ENCODE measurements at regions of chr12 and their contacts with region 1.

Region 1: GRCh38 chr12:57005980-57006808 is at the start of gene ZBTB39:
- DNase-seq: peak; percentile 16 to 85 (median 58)
- ATAC-seq: peak; percentile 81 to 89 (median 88)
- H3K4me3 ChIP-seq: peak within 1 kb of the TSS; percentile 60 to 70
- H3K4me3 Mint-ChIP-seq: peak within 1 kb of the TSS; percentile 92 to 95 (median 93)
- H3K27ac ChIP-seq: peak within 1 kb of the TSS; percentile 60
- H3K27ac Mint-ChIP-seq: peak within 1 kb of the TSS; percentile 95 to 96
- H3K4me1 ChIP-seq: peaks cover 33 to 48% of the 10 kb centered on the region in 2 experiments
- H3K4me1 Mint-ChIP-seq: peaks cover 63 to 86% (median 76%) of the 10 kb centered on the region in 3 donors
- H3K27me3 ChIP-seq: no peaks in the 10 kb centered on the region
- H3K27me3 Mint-ChIP-seq: no peaks in the 10 kb centered on the region
- total RNA-seq, gene ZBTB39: 7.9 to 11.2 (median 11.0) TPM

Region 2: DNA sequence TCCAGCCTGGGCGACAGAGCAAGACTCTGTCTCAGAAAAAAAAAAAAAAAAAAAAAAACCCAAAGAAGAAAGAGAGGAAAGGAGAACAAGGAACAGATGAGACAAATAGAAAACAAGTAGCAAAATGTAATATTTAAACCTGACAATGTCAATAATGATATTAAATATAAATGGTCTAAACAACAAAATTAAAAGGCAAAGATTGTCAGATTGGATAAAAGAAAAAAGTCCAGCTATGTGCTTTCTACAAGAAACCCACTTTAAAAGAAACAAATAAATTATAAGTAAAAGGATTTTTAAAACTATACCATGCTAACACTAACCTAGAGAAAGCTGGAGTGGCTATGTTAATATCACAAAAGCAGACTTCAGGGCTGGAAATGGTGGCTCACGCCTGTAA is 613.9 kb before region 1 on chr12:
- CTCF ChIA-PET with region 1: interaction called in 1 of 2 experiments, 11 read pairs
- POLR2A ChIA-PET with region 1: no interaction called
- DNase-seq: no peak
- ATAC-seq: no peak
- H3K4me3 ChIP-seq: no peak overlapping the region
- H3K4me3 Mint-ChIP-seq: no peak overlapping the region
- H3K27ac ChIP-seq: no peak overlapping the region
- H3K27ac Mint-ChIP-seq: no peak overlapping the region
- H3K4me1 ChIP-seq: no peaks in the 10 kb centered on the region
- H3K4me1 Mint-ChIP-seq: no peaks in the 10 kb centered on the region
- H3K27me3 ChIP-seq: no peaks in the 10 kb centered on the region
- H3K27me3 Mint-ChIP-seq: no peaks in the 10 kb centered on the region

Region 3: GRCh38 chr12:56941299-56942017 is 64.7 kb before region 1 on chr12:
- CTCF ChIA-PET with region 1: no interaction called
- POLR2A ChIA-PET with region 1: no interaction called
- DNase-seq: no peak
- ATAC-seq: no peak
- H3K4me3 ChIP-seq: no peak overlapping the region
- H3K4me3 Mint-ChIP-seq: no peak overlapping the region
- H3K27ac ChIP-seq: no peak overlapping the region
- H3K27ac Mint-ChIP-seq: no peak overlapping the region
- H3K4me1 ChIP-seq: no peaks in the 10 kb centered on the region
- H3K4me1 Mint-ChIP-seq: no peaks in the 10 kb centered on the region
- H3K27me3 ChIP-seq: peaks cover 0 to 8% of the 10 kb centered on the region in 2 experiments
- H3K27me3 Mint-ChIP-seq: peaks cover 10 to 12% of the 10 kb centered on the region in 2 donors

Region 4: GRCh38 chr12:56987551-56988053 is 18.6 kb before region 1 on chr12:
- CTCF ChIA-PET with region 1: interaction called in 1 of 2 experiments, 11 read pairs
- POLR2A ChIA-PET with region 1: no interaction called
- DNase-seq: peak in 34 of 35 experiments; percentile 41 to 83 (median 66)
- ATAC-seq: peak; percentile 78 to 80 (median 80)
- H3K4me3 ChIP-seq: no peak overlapping the region
- H3K4me3 Mint-ChIP-seq: peak overlapping the region in 1 of 3 donors; percentile 46
- H3K27ac ChIP-seq: no peak overlapping the region
- H3K27ac Mint-ChIP-seq: no peak overlapping the region
- H3K4me1 ChIP-seq: peaks cover 0 to 14% of the 10 kb centered on the region in 2 experiments
- H3K4me1 Mint-ChIP-seq: peaks cover 9 to 15% (median 15%) of the 10 kb centered on the region in 3 donors
- H3K27me3 ChIP-seq: no peaks in the 10 kb centered on the region
- H3K27me3 Mint-ChIP-seq: no peaks in the 10 kb centered on the region

Region 5: DNA sequence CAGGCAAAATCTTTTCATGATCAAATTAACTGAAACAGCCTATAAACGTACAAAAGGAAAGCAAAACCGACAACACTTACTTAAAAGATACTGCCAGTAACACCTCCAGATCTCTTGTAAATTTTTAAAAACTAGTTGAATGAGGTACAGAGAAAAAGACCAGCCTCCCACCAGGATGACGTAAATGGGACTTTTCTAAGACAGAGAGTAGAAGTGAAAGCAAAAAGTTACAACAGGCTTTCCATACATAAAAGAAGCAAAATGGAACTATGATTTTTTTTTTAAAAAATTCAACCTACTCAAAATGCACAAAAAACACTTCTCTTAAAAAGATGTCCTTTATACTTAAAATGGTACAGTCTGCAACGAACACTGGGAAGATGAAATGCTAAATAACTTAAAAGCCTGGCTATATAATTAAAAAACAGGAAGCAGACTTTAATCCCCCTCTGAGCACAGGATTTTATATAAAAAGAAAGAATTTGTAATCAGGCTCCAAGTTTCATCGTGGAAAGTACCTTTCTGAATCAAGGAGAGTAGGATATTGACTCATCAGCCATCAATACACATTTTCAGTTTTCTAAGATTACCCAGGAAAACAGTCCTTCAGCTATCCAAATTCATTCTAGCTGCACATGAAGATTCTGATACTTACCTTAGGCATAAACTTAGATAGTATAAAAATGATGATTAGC is 57.9 kb after region 1 on chr12:
- CTCF ChIA-PET with region 1: interaction called, 24 to 42 read pairs
- POLR2A ChIA-PET with region 1: no interaction called
- DNase-seq: peak in 32 of 35 experiments; percentile 17 to 91 (median 61)
- ATAC-seq: peak; percentile 84 to 99 (median 88)
- H3K4me3 ChIP-seq: peak overlapping the region in 1 of 2 donors; percentile 26
- H3K4me3 Mint-ChIP-seq: peak overlapping the region; percentile 72 to 76 (median 75)
- H3K27ac ChIP-seq: peak overlapping the region; percentile 91
- H3K27ac Mint-ChIP-seq: peak overlapping the region; percentile 96 to 97
- H3K4me1 ChIP-seq: peaks cover 4 to 13% of the 10 kb centered on the region in 2 experiments
- H3K4me1 Mint-ChIP-seq: peaks cover 18 to 31% (median 29%) of the 10 kb centered on the region in 3 donors
- H3K27me3 ChIP-seq: no peaks in the 10 kb centered on the region
- H3K27me3 Mint-ChIP-seq: no peaks in the 10 kb centered on the region